ENCODE measurements at regions of chr12 and their contacts with region 1.

Region 1: DNA sequence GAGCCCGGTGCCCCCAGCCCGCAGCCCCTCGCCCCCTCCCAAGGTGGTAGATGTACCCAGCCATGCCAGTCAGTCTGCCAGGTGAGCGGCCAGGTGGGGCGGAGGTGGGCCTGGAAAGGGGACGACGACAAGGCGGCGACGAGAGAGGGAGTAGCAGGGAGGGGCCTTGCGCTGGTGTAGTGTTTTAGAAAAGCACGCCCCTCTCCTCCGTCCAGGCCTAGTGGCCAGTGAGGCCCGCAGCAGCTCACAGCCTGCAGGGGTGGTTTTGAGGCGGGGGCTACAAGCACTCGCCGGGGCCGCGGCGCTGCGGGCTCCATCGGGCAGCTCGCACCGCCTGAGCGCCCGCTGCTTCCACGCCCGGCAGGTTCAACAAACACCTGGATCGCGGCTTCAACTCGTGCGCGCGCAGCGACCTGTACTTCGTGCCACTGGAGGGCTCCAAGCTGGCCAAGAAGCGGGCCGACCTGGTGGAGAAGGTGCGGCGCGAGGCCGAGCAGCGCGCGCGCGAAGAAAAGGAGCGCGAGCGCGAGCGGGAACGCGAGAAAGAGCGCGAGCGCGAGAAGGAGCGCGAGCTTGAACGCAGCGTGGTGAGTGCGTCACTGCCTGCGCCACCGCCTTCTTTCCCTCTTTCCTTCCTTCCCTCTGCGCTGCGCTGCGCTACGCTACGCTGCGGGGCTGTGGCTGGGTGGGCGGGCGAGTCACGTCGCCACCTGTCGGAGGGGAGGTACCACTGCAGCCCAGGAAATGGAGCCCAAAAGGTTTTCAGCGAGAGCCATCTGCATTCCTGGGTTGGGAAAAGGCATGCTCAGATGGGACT is 5.9 kb upstream of the RNU7-1 start:
- DNase-seq: peak; percentile 87 to 96 (median 92)
- ATAC-seq: peak; percentile 85 to 93
- H3K4me3 Mint-ChIP-seq: peak overlapping the region; percentile 72 to 91 (median 86)
- H3K27ac Mint-ChIP-seq: peak overlapping the region; percentile 89 to 98 (median 98)
- H3K4me1 Mint-ChIP-seq: peaks cover 29 to 53% (median 48%) of the 10 kb centered on the region in 4 donors
- H3K27me3 Mint-ChIP-seq: no peaks in the 10 kb centered on the region

Region 2: GRCh38 chr12:6723607-6724396 is 213.9 kb before region 1 on chr12 and contains the start of gene COPS7A:
- POLR2A ChIA-PET with region 1: interaction called, 10 read pairs
- DNase-seq: peak; percentile 73 to 98 (median 92)
- ATAC-seq: peak; percentile 85 to 90
- H3K4me3 Mint-ChIP-seq: peak within 1 kb of the TSS; percentile 74 to 99 (median 93)
- H3K27ac Mint-ChIP-seq: peak within 1 kb of the TSS; percentile 92 to 98 (median 96)
- H3K4me1 Mint-ChIP-seq: peaks cover 19 to 32% (median 24%) of the 10 kb centered on the region in 4 donors
- H3K27me3 Mint-ChIP-seq: no peaks in the 10 kb centered on the region
- polyA plus RNA-seq, gene COPS7A: 34.9 to 42.4 (median 36.2) TPM

Region 3: GRCh38 chr12:6914246-6914946 is 23.3 kb before region 1 on chr12 and contains the start of gene ENO2:
- POLR2A ChIA-PET with region 1: interaction called, 28 read pairs
- DNase-seq: peak; percentile 77 to 93 (median 82)
- ATAC-seq: peak; percentile 89 to 92
- H3K4me3 Mint-ChIP-seq: peak within 1 kb of the TSS; percentile 91 to 97 (median 94)
- H3K27ac Mint-ChIP-seq: peak within 1 kb of the TSS; percentile 87 to 98 (median 95)
- H3K4me1 Mint-ChIP-seq: peaks cover 16 to 52% (median 27%) of the 10 kb centered on the region in 4 donors
- H3K27me3 Mint-ChIP-seq: no peaks in the 10 kb centered on the region
- polyA plus RNA-seq, gene ENO2: 19.4 to 29.2 (median 19.7) TPM

Region 4: DNA sequence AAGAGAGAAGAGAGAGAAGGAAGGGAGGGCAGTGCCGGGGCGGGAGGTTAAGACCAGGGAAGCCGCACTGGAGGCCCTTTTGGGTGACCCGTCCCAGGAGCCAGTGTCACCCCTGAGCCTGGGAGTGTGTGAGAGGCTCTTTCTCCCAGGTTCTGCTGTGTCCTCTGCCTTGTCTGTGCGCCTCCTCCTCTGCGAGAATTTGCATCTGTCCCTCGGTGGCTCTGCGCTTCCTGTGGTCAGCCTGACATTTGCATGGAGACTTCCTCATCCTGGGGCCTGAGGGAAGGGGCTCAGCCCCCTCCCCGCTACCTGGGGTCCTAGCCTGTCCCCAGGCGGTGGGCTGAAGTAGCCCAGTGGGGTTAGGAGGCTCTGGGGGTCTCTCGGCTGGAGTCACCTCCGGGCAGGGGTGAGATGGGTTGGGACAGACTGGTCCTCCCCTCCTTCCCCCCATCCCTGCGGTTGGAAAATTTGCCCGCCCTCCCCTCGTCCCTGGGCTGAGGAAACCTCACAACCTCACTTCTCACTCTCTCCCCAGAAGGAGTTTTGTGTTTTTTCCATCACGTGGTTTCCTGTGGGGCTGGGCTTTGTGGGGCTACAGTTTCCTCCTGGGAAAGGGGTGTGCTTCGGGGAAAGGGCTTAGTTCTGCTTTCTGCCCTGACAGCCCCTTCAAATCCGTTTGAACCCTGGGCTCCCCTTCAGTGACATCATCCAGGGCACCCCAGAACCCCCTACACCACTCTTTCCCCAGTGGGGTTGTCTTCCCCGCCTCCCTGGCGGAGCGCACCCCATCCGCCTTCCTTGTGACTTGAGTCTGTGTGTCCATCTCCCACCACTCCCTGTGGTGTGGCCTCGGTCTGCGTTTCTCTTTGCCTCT is 16.0 kb after region 1 on chr12:
- POLR2A ChIA-PET with region 1: interaction called, 1,315 read pairs
- DNase-seq: peak; percentile 55 to 88 (median 79)
- ATAC-seq: peak; percentile 38 to 45
- H3K4me3 Mint-ChIP-seq: peak overlapping the region; percentile 98 to 100 (median 98)
- H3K27ac Mint-ChIP-seq: peak overlapping the region; percentile 93 to 99 (median 98)
- H3K4me1 Mint-ChIP-seq: peaks cover 50 to 93% (median 80%) of the 10 kb centered on the region in 4 donors
- H3K27me3 Mint-ChIP-seq: no peaks in the 10 kb centered on the region

Region 5: DNA sequence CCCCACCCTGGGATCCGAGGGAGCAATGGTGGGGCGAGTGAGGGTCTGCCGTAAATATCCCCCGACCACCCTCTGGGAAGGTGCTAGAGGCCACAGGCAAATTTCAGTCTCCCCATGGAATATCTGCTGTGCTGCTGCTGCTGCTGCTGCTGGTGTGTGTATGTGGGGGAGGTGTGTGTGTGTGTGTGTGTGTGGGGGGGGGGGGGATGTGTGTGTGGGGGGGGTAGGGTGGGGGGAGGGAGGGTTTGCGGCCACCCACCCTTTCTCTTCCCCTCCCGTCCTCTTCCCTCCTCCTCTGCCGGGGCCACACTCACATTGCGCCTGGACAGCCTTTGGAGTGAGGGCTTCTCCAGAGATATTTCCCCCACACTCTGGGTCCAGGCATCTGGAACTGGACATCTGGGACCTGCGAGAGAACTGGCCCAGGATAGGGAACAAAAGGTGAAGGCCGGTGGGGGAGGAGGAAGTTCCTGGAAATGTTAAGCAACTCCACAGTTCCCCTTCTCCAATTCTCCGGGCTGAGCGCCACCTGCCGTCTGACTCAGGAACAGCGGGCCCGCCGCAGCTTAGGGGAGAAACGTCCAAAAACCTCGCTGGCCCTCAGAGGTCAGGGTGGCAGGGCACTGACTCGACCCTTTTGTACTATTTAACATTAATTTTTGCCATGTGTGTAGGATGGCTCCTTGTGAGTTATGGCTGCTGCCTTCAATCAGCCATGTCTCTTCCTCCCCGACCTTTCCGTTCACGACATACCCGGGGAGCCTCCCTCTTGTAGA is 171.3 kb after region 1 on chr12 and contains the start of gene C1RL:
- POLR2A ChIA-PET with region 1: interaction called, 11 read pairs
- DNase-seq: peak; percentile 34 to 86 (median 74)
- ATAC-seq: peak; percentile 35 to 38
- H3K4me3 Mint-ChIP-seq: peak within 1 kb of the TSS; percentile 90 to 96 (median 94)
- H3K27ac Mint-ChIP-seq: peak within 1 kb of the TSS; percentile 89 to 97 (median 94)
- H3K4me1 Mint-ChIP-seq: peaks cover 26 to 51% (median 46%) of the 10 kb centered on the region in 4 donors
- H3K27me3 Mint-ChIP-seq: no peaks in the 10 kb centered on the region
- polyA plus RNA-seq, gene C1RL: 3.7 to 5.7 (median 4.8) TPM